Left ventricle myocardium inferior (tissue), 1 donor: ENCODE measurements at regions of chr10 and their contacts with region 1.

Region 1: DNA sequence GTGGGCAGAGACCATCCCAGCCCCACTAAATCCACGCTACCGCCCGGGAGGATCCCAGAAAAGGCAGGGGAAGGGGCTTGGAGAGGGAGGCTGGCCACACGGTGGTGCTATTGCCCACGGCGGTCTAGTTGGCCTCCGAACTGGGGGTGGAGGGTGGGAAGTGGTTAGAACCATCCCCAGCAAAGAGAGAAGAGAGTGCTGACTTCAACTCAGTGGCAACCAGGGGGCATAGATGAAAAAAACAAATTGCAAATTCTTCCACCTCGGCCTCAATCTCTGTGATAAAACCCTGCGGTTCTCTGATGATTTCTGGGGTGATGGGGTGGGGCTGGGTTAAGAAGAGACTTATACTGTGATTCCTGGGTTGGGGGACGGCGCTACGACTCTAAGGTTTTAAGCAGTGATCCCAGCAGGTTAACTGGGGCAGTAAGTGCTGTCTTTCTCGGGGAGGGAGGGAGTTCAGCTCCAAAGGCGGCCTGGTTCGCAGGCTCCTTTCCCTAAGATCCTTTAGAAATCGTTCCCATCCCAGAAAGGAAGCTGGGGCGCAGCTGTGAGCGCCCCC is 154.5 kb upstream of the LYZL2 start:
- DNase-seq: peak; percentile 86
- H3K4me3 ChIP-seq: peak overlapping the region; percentile 78
- H3K27ac ChIP-seq: peak overlapping the region; percentile 97
- H3K4me1 ChIP-seq: peaks cover 26% of the 10 kb centered on the region
- H3K27me3 ChIP-seq: no peaks in the 10 kb centered on the region
- CTCF ChIP-seq: peak; percentile 88

Region 2: DNA sequence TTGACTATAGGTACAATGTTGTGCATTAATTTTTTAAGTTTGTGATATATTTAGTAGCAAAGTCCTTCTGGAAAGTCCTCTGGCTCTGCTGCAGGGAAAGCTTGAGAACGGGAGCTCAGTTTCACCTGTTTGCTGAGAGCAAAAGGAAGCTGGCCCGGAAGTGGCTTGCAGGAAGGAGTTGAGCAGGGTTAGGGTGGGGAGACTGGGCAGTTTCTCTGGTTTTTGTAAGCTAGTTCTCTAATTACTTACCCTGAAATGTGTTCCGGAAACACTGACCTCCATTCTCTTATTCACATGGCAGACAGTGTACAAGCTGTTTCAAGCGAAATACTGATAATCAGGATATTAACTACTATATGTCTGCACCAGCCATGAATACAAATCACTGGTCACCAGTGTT is 327.8 kb before region 1 on chr10:
- intact Hi-C with region 1: no loop called
- DNase-seq: peak; percentile 22
- H3K4me3 ChIP-seq: peak overlapping the region; percentile 29
- H3K27ac ChIP-seq: peak overlapping the region; percentile 85
- H3K4me1 ChIP-seq: peaks cover 79% of the 10 kb centered on the region
- H3K27me3 ChIP-seq: no peaks in the 10 kb centered on the region
- CTCF ChIP-seq: no peak

Region 3: DNA sequence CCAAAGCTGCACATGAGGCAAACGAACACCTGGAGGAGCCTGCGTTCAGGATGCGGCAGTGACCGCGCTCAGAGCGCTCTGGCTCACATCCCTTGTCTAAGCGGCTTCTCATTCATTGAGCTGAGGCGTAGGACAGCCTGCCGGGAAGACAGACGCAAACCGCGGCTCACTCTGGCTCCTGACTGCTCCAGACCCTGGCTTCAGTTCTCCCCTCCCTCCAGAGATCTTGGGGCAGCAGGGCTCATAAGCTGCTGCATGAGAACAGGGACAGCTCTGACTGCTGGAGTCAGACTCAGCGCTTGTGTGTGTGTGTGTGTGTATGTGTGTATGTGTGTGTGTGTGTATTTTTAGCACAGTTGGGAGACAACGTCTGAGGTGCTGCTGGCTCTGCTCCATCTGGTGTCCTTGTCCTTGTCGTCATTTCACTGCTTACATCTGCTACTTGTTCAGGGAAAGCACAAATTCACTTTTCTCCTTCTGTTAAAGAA is 138.6 kb before region 1 on chr10:
- intact Hi-C with region 1: no loop called
- DNase-seq: peak; percentile 38
- H3K4me3 ChIP-seq: peak overlapping the region; percentile 38
- H3K27ac ChIP-seq: peak overlapping the region; percentile 80
- H3K4me1 ChIP-seq: peaks cover 46% of the 10 kb centered on the region
- H3K27me3 ChIP-seq: no peaks in the 10 kb centered on the region
- CTCF ChIP-seq: no peak

Region 4: DNA sequence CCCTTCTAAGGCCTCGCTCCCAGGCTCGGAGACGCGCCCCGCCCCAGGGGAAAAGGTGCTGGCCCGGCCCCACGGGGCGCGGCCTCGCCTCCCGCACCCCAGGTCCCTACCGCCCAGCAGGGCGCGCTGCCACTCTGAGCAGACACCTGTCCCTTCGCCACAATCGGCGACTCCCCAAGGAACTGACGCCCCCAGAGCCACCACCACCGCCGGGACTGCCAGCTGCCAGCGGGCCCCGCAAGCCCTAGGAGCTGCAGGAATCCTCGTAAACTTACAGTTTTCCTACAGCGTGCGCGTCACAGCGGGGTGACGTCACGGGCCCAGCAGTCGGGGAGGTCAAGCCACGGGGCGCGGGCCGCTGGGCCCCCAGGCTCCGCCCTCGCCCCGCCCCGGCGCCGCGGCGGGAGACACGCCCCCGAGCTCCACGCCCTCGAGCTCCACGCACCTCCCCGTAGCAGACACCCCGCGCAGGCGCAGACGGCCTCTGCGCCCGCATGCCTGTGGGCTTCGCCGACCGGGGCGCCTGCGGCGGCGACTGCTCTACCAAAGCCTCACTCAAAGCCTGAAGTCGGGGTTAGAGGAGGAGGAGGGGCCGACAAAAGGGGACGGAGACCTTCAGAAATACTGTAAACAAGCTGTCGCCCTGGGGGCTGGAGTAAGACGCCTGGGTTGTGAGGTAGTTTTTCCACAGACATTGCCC is 247.7 kb after region 1 on chr10 and contains the start of gene ZNF438:
- intact Hi-C with region 1: loop called (anchors 10 kb)
- DNase-seq: peak; percentile 96
- H3K4me3 ChIP-seq: peak within 1 kb of the TSS; percentile 76
- H3K27ac ChIP-seq: peak within 1 kb of the TSS; percentile 100
- H3K4me1 ChIP-seq: peaks cover 55% of the 10 kb centered on the region
- H3K27me3 ChIP-seq: no peaks in the 10 kb centered on the region
- CTCF ChIP-seq: peak; percentile 76
- total RNA-seq, gene ZNF438: 13.2 TPM

Region 5: GRCh38 chr10:31490858-31491504 is 707.0 kb after region 1 on chr10:
- intact Hi-C with region 1: loop called (anchors 10 kb)
- DNase-seq: no peak
- H3K4me3 ChIP-seq: no peak overlapping the region
- H3K27ac ChIP-seq: peak overlapping the region; percentile 2
- H3K4me1 ChIP-seq: no peaks in the 10 kb centered on the region
- H3K27me3 ChIP-seq: no peaks in the 10 kb centered on the region
- CTCF ChIP-seq: peak; percentile 72